ENCODE measurements at regions of chr10 and their contacts with region 1.

Region 1: GRCh38 chr10:73886085-73886529 is 11.8 kb upstream of the CAMK2G start:
- DNase-seq: no peak
- ATAC-seq: peak; percentile 93
- H3K4me3 ChIP-seq: no peak overlapping the region
- H3K27ac ChIP-seq: no peak overlapping the region
- H3K4me1 ChIP-seq: peaks cover 6% of the 10 kb centered on the region
- H3K27me3 ChIP-seq: no peaks in the 10 kb centered on the region
- CTCF ChIP-seq: peak; percentile 89 to 94 (median 90)
- EP300 ChIP-seq: no peak
- POLR2A ChIP-seq: no peak
- RAD21 ChIP-seq: peak; percentile 94

Region 2: DNA sequence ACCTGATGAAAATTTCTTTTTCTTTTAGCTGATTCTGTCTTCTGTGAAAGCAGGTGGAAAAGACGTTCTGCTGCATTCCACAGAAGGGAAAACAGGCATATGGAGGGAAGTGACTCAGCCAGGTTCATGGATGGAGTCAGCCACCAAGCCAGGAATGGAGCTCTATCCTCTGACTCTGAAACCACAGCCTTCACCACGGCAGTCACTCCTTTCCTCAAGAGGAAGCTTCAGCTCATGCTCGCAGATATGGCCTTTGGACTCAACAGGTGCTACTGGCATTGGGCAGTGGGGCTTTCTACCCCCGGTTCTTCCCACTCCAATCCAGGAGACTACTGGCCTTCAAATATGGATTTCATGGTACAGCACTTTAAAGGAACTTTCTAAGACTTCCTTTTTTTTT is 13.3 kb after region 1 on chr10:
- CTCF ChIA-PET with region 1: interaction called, 84 read pairs
- POLR2A ChIA-PET with region 1: interaction called, 18 read pairs
- RAD21 ChIA-PET with region 1: interaction called, 85 read pairs
- SMC1A ChIA-PET with region 1: interaction called, 118 read pairs
- in situ Hi-C with region 1: no loop called
- intact Hi-C with region 1: no loop called
- DNase-seq: no peak
- ATAC-seq: no peak
- H3K4me3 ChIP-seq: no peak overlapping the region
- H3K27ac ChIP-seq: no peak overlapping the region
- H3K4me1 ChIP-seq: no peaks in the 10 kb centered on the region
- H3K27me3 ChIP-seq: no peaks in the 10 kb centered on the region; a peak in 1 of 4 replicates
- CTCF ChIP-seq: no peak
- EP300 ChIP-seq: no peak
- POLR2A ChIP-seq: no peak
- RAD21 ChIP-seq: no peak

Region 3: DNA sequence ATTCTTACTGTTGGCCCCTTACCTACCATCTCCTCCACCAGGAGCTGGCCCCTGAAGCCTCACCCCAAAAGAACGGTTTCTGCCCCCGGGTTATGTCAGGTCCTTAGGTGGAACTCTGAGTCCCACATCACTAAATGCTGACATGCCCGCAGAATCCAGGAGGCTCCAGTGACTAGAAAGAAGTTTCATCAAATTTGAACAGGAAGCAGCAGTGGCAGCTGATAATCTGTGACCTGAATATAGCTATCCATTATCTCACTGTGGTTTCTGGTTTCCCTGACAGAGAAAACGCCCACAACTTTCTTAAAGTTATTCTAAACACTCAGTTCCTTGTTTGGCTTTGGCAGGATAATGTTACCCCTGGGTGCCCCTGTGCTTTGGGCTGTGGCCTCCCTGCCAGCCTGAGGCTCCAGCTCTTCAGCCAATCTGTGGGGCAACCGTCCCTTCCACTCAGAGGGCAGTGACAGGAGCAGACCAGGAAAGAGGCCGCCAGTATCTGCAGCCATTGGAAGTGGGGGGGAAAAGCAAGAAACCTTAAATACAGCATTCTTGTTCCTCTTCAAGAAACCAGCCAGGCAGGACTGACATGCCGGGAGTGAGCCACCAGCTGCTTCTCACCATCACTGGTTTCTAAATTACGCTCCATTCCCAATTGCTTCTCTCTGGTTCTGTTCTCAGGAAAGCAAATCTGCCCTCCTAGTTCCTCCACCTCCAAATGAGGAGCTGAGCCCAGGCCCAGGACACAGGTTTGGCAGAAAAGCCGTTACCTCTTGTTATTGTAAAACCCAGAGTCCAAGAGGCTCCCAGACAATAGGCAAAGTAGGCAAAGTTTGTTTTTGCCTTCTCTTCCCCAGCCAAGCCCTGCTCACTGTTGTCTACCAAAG is 70.6 kb after region 1 on chr10:
- CTCF ChIA-PET with region 1: interaction called, 68 read pairs
- POLR2A ChIA-PET with region 1: no interaction called
- RAD21 ChIA-PET with region 1: interaction called, 43 read pairs
- SMC1A ChIA-PET with region 1: interaction called, 47 read pairs
- in situ Hi-C with region 1: no loop called
- intact Hi-C with region 1: no loop called
- DNase-seq: peak; percentile 66
- ATAC-seq: peak; percentile 72
- H3K4me3 ChIP-seq: peak overlapping the region; percentile 55
- H3K27ac ChIP-seq: peak overlapping the region; percentile 80
- H3K4me1 ChIP-seq: peaks cover 54% of the 10 kb centered on the region
- H3K27me3 ChIP-seq: no peaks in the 10 kb centered on the region
- CTCF ChIP-seq: no peak
- EP300 ChIP-seq: peak; percentile 56 to 79
- POLR2A ChIP-seq: no peak
- RAD21 ChIP-seq: no peak

Region 4: DNA sequence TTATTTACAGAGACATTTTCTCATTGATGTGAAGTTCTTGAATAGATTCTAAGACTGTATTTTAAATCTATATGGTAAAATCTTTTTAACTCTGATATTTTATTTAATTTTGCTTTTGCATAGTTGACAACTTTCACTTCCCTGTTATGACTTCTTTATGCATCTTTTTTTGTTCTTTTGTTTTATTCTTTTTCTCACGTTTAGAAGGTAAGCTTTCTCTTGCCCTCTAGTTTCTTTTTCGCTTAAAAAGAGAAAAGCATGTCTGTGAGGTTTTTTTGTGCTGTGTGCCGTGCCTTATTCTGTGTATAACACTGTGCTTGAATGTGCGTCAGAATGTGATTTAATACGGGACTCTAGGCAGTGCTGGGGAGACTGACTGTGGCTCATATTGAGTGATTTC is 189.8 kb after region 1 on chr10:
- CTCF ChIA-PET with region 1: interaction called, 154 read pairs
- POLR2A ChIA-PET with region 1: interaction called, 4 read pairs
- RAD21 ChIA-PET with region 1: interaction called, 105 read pairs
- SMC1A ChIA-PET with region 1: interaction called, 160 read pairs
- in situ Hi-C with region 1: loop called (anchors 25 kb)
- intact Hi-C with region 1: loop called (anchors 1 kb)
- DNase-seq: no peak
- ATAC-seq: no peak
- H3K4me3 ChIP-seq: 0 out of 2 replicates have a peak overlapping the region, but pooled peaks have one; percentile 6
- H3K27ac ChIP-seq: no peak overlapping the region
- H3K4me1 ChIP-seq: peaks cover 29% of the 10 kb centered on the region
- H3K27me3 ChIP-seq: no peaks in the 10 kb centered on the region
- CTCF ChIP-seq: no peak
- EP300 ChIP-seq: no peak
- POLR2A ChIP-seq: no peak
- RAD21 ChIP-seq: no peak

Region 5: GRCh38 chr10:74103560-74104248 is 217.6 kb after region 1 on chr10:
- CTCF ChIA-PET with region 1: interaction called, 185 read pairs
- POLR2A ChIA-PET with region 1: no interaction called
- RAD21 ChIA-PET with region 1: interaction called, 35 read pairs
- SMC1A ChIA-PET with region 1: interaction called, 70 read pairs
- in situ Hi-C with region 1: loop called (anchors 25 kb)
- intact Hi-C with region 1: loop called (anchors 2 kb)
- DNase-seq: no peak
- ATAC-seq: peak; percentile 85
- H3K4me3 ChIP-seq: no peak overlapping the region
- H3K27ac ChIP-seq: no peak overlapping the region
- H3K4me1 ChIP-seq: no peaks in the 10 kb centered on the region
- H3K27me3 ChIP-seq: no peaks in the 10 kb centered on the region
- CTCF ChIP-seq: peak; percentile 52 to 71 (median 67)
- EP300 ChIP-seq: no peak
- POLR2A ChIP-seq: no peak
- RAD21 ChIP-seq: peak; percentile 84

Region 6: GRCh38 chr10:75235375-75236177 is 1349.5 kb after region 1 on chr10 and contains the start of gene COMTD1:
- CTCF ChIA-PET with region 1: no interaction called
- POLR2A ChIA-PET with region 1: no interaction called
- RAD21 ChIA-PET with region 1: interaction called, 4 read pairs
- SMC1A ChIA-PET with region 1: no interaction called
- in situ Hi-C with region 1: loop called (anchors 10 kb)
- intact Hi-C with region 1: loop called (anchors 5 kb)
- DNase-seq: peak; percentile 47
- ATAC-seq: peak; percentile 75
- H3K4me3 ChIP-seq: peak within 1 kb of the TSS; percentile 86
- H3K27ac ChIP-seq: peak within 1 kb of the TSS; percentile 82
- H3K4me1 ChIP-seq: peaks cover 11% of the 10 kb centered on the region
- H3K27me3 ChIP-seq: no peaks in the 10 kb centered on the region
- CTCF ChIP-seq: peak; percentile 100; a peak in 5 of 6 replicates
- EP300 ChIP-seq: no peak
- POLR2A ChIP-seq: peak; percentile 67
- RAD21 ChIP-seq: peak; percentile 85
- polyA plus RNA-seq, gene COMTD1: 0.39 to 3.4 TPM

Measured in GM12878 (cell line).